T-cell (primary cell): ENCODE measurements at regions of chr14 and their contacts with region 1.

Region 1: GRCh38 chr14:65211341-65211987 is 109.1 kb upstream of the MAX start:
- DNase-seq: no peak
- ATAC-seq: no peak
- H3K4me3 ChIP-seq: no peak overlapping the region
- H3K4me3 Mint-ChIP-seq: no peak overlapping the region
- H3K27ac ChIP-seq: no peak overlapping the region
- H3K27ac Mint-ChIP-seq: peak overlapping the region in 1 of 2 donors; percentile 65
- H3K4me1 ChIP-seq: peaks cover 20 to 34% of the 10 kb centered on the region in 2 experiments
- H3K4me1 Mint-ChIP-seq: peaks cover 37 to 48% (median 38%) of the 10 kb centered on the region in 3 donors
- H3K27me3 ChIP-seq: peaks cover 0 to 2% of the 10 kb centered on the region in 2 experiments
- H3K27me3 Mint-ChIP-seq: no peaks in the 10 kb centered on the region

Region 2: DNA sequence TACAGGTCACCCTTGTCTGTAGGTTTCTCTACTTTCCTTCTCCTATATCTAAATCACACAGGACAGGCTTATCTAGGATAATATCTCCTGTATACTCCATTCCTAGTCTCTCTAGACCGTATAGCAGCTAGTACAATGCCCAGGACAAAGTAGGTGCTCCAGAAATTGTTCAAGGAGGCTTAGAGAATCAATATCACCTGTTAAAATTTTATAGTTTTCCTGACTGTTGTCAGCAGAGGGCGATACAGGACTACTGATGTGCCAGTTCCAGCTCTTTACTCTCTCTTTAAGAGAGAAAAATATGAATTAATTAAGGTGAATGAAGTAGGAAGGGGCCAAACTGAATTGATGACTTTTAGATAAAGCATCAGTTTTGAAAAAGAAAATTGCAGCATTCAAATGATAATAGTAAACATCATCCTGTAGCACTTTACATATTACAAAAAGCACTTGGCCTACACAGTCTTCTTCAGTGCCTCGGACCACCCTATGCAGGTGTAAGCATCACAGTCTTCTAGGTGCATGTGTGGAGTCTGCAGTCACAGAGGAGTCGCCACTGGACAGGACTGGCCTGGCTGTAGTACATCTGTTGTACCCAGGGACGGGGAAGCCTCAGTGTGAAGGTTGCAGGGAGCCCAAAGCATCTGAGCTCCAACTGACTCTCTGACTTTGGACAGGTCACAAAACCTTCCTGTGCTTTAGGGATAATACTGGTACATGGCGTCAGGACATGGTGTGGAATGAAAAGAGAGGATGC is 47.2 kb before region 1 on chr14:
- CTCF ChIA-PET with region 1: no interaction called
- POLR2A ChIA-PET with region 1: no interaction called
- DNase-seq: peak in 23 of 35 experiments; percentile 5 to 77 (median 23)
- ATAC-seq: peak; percentile 43 to 64 (median 54)
- H3K4me3 ChIP-seq: no peak overlapping the region
- H3K4me3 Mint-ChIP-seq: no peak overlapping the region
- H3K27ac ChIP-seq: no peak overlapping the region
- H3K27ac Mint-ChIP-seq: no peak overlapping the region
- H3K4me1 ChIP-seq: no peaks in the 10 kb centered on the region
- H3K4me1 Mint-ChIP-seq: peaks cover 0 to 6% (median 6%) of the 10 kb centered on the region in 3 donors
- H3K27me3 ChIP-seq: no peaks in the 10 kb centered on the region
- H3K27me3 Mint-ChIP-seq: no peaks in the 10 kb centered on the region

Region 3: GRCh38 chr14:65239143-65239937 is 27.9 kb after region 1 on chr14:
- CTCF ChIA-PET with region 1: no interaction called
- POLR2A ChIA-PET with region 1: no interaction called
- DNase-seq: no peak
- ATAC-seq: no peak
- H3K4me3 ChIP-seq: no peak overlapping the region
- H3K4me3 Mint-ChIP-seq: no peak overlapping the region
- H3K27ac ChIP-seq: no peak overlapping the region
- H3K27ac Mint-ChIP-seq: no peak overlapping the region
- H3K4me1 ChIP-seq: peaks cover 5 to 12% of the 10 kb centered on the region in 2 experiments
- H3K4me1 Mint-ChIP-seq: peaks cover 4 to 10% (median 4%) of the 10 kb centered on the region in 3 donors
- H3K27me3 ChIP-seq: peaks cover 0 to 5% of the 10 kb centered on the region in 2 experiments
- H3K27me3 Mint-ChIP-seq: no peaks in the 10 kb centered on the region

Region 4: DNA sequence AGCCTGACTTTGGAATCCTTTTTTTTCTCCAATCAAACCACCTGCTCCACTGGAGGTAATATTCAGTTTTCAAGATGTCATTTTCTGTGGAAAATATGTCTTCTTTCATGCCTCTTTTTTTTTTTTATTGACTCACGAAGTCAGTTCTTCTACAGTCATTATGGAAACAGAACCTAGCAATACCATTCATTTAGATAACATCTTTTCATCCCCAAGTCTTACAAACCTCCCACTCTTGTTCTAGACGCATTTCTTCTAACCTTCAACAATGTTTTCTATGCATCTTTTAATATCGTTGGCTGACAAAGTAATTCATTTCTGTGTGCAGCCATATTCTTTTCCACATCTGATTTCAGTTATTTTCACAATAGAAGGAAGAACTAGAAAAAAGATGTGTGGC is 800.4 kb after region 1 on chr14:
- CTCF ChIA-PET with region 1: no interaction called
- POLR2A ChIA-PET with region 1: interaction called in 1 of 2 experiments, 11 read pairs
- DNase-seq: no peak
- ATAC-seq: no peak
- H3K4me3 ChIP-seq: no peak overlapping the region
- H3K4me3 Mint-ChIP-seq: no peak overlapping the region
- H3K27ac ChIP-seq: no peak overlapping the region
- H3K27ac Mint-ChIP-seq: no peak overlapping the region
- H3K4me1 ChIP-seq: no peaks in the 10 kb centered on the region
- H3K4me1 Mint-ChIP-seq: no peaks in the 10 kb centered on the region
- H3K27me3 ChIP-seq: no peaks in the 10 kb centered on the region
- H3K27me3 Mint-ChIP-seq: peaks cover 3 to 7% of the 10 kb centered on the region in 2 donors